ENCODE measurements at regions of chr2 and their contacts with region 1.

Region 1: DNA sequence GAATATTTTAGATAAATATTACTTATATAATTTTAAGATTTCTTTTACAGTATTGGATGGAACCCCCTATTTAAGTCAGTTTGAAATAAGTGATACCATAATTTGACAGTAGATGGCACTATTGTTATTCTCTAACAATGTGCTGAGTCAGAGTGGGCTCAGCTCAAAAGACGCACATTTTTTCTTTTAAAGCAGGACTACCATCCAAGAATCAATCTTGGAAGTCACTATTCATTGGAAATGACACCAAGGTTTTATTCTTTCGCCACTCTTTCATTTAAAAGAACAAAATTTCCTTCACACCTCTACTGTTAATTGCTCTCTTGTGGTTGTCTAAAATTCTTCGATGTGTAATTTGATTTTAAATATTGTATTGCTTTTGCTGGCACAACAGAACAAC is 32.6 kb upstream of the SPAG16 start:
- DNase-seq: no peak
- H3K4me3 ChIP-seq: no peak overlapping the region
- H3K27ac ChIP-seq: no peak overlapping the region
- H3K4me1 ChIP-seq: peaks cover 0 to 3% of the 10 kb centered on the region in 2 donors
- H3K27me3 ChIP-seq: no peaks in the 10 kb centered on the region
- CTCF ChIP-seq: peak; percentile 38 to 73 (median 61)

Region 2: GRCh38 chr2:212686285-212686895 is 565.2 kb before region 1 on chr2:
- intact Hi-C with region 1: loop called (anchors 10 kb)
- DNase-seq: peak in 1 of 2 donors; percentile 72
- H3K4me3 ChIP-seq: no peak overlapping the region
- H3K27ac ChIP-seq: no peak overlapping the region
- H3K4me1 ChIP-seq: no peaks in the 10 kb centered on the region
- H3K27me3 ChIP-seq: no peaks in the 10 kb centered on the region
- CTCF ChIP-seq: peak; percentile 45 to 87 (median 78)

Region 3: DNA sequence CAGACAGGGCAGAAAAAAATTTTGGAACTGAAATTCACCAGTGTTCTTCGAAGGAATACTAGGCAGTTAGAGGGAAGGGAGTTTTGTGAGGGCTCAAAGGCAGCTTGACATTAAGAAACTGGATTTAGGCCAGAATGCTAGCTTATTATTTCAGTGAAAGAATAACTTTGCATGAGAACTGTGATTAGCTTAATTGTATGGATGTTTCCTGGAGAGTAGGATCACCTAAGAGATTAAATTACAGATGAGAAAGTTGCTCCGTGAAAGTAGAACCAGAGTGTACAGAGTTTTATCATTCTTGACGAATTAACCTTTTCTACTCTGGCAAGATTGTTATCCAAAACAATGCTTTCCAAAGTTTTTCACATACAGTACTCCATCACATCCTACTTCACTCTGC is 38.9 kb after region 1 on chr2:
- intact Hi-C with region 1: loop called (anchors 2 kb)
- DNase-seq: no peak
- H3K4me3 ChIP-seq: no peak overlapping the region
- H3K27ac ChIP-seq: no peak overlapping the region
- H3K4me1 ChIP-seq: no peaks in the 10 kb centered on the region
- H3K27me3 ChIP-seq: no peaks in the 10 kb centered on the region
- CTCF ChIP-seq: no peak

Region 4: DNA sequence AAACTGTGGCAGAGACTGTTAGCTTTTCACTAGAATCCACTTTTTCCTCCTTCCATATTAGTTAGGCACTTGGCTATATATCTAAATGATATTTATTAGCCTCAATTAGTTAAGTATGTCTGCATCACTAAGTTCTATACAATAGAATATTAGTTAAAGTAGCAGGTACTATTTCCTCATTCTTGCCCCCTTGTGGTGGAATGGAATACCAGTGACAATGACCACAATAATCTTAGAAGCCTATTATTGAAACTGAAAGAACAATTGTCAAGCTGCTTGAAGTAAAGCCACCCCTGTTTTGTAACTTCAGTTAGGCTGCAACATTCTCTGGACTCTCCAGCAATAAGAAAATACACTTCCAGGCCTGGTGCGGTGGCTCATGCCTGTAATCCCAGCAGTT is 682.9 kb after region 1 on chr2:
- intact Hi-C with region 1: loop called (anchors 5 kb)
- DNase-seq: no peak
- H3K4me3 ChIP-seq: no peak overlapping the region
- H3K27ac ChIP-seq: no peak overlapping the region
- H3K4me1 ChIP-seq: no peaks in the 10 kb centered on the region
- H3K27me3 ChIP-seq: no peaks in the 10 kb centered on the region
- CTCF ChIP-seq: peak in 1 of 3 experiments; percentile 25

Measured in ascending aorta (tissue), 2 donors.